ENCODE measurements at regions of chr1 and their contacts with region 1.

Region 1: DNA sequence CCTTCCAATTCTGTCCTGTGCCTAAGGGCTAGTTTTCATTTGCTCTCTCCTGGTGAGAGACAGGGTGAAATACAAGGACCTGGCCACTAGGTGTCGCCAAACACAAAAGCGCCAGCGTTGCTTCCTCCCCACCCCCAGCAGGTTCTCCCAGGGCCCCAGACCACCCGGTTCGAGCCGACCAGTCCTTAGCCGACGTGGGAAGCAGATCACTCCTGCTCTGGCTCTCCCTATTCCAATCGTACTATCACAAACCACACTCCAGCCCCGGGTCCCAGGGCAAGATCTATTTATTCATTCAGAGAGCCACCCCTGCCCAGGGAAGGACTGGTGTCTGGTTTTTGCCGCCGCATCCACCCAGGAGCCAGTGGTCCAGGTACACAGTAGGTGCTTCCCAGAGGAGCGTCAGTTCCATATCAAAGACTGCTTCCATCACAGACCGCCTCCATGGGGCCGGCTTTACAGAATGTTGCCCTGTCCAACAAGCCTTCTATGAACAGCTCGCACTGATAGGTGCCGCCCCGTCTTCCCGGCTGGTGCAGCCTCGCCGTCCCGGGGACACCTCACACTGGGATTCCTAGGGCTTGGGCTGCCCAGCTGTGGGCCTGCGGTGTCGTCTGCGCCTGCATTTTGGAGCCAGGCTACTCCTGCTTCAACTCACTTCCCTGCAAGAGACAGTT is 35.0 kb downstream of the CTNNBIP1 start:
- ATAC-seq: peak; percentile 38 to 96 (median 90)
- H3K4me3 ChIP-seq: peak overlapping the region in 1 of 5 donors; percentile 2
- H3K27ac ChIP-seq: peak overlapping the region in 1 of 2 donors; percentile 2
- H3K4me1 ChIP-seq: peaks cover 4 to 7% of the 10 kb centered on the region in 2 donors

Region 2: GRCh38 chr1:10429868-10430215 is 554.7 kb after region 1 on chr1:
- in situ Hi-C with region 1: loop called in 2 of 9 experiments (anchors 10 kb)
- ATAC-seq: no peak
- H3K4me3 ChIP-seq: peak overlapping the region; percentile 63 to 93 (median 72)
- H3K27ac ChIP-seq: peak overlapping the region in 1 of 2 donors; percentile 78
- H3K4me1 ChIP-seq: peaks cover 14 to 21% of the 10 kb centered on the region in 2 donors